Tibial artery (tissue), 4 donors: ENCODE measurements at regions of chr1 and their contacts with region 1.

Region 1: DNA sequence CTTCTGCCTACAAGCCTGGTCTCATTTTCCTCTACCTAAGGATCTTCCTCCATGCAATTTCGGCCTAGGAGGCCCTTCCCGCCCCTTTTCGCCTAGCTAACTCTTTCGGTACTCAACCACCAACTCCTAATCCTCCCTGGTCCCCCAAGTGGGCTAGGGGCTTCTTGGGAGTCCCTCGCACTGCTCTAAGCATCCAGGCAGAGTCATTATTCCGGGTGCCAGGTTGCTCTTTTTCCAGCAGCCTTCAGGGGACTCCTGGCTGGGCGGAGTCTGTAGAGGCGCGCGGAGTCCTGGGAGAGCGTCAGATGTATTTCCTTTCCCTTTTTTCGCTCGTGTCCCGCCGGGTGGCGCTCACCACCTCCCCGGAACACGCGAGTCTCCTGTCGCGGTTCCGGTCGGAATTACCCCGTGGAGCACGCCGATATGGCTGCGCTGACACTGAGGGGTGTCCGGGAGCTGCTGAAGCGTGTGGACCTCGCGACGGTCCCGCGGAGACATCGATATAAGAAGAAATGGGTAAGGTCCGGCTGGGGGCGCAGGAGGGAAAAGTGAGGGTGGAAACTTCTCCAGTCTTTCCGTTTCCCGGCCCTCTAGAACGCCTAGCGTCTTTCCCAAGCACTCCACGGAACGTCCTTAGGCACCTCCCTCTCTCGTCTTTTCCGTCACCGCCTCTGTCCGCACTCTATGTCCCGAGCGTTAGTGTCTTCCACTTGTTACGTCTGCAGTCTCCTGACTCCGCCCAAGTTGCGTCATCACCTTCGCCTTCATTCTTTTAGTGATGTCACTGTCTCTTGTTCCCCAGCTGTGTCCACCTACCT is at the start of gene NSUN4:
- DNase-seq: peak; percentile 95 to 97
- H3K4me3 ChIP-seq: peak within 1 kb of the TSS; percentile 59 to 82
- H3K27ac ChIP-seq: peak within 1 kb of the TSS; percentile 88 to 97
- H3K4me1 ChIP-seq: peaks cover 0 to 24% (median 20%) of the 10 kb centered on the region in 4 donors
- H3K27me3 ChIP-seq: no peaks in the 10 kb centered on the region
- CTCF ChIP-seq: peak; percentile 57 to 62

Region 2: GRCh38 chr1:46247436-46248121 is 93.0 kb before region 1 on chr1 and contains the start of gene RAD54L:
- intact Hi-C with region 1: loop called (anchors 10 kb)
- DNase-seq: peak; percentile 98
- H3K4me3 ChIP-seq: peak within 1 kb of the TSS; percentile 58 to 74
- H3K27ac ChIP-seq: peak within 1 kb of the TSS; percentile 45 to 61
- H3K4me1 ChIP-seq: peaks cover 0 to 15% (median 12%) of the 10 kb centered on the region in 4 donors
- H3K27me3 ChIP-seq: no peaks in the 10 kb centered on the region
- CTCF ChIP-seq: no peak

Region 3: GRCh38 chr1:46262508-46262907 is 78.1 kb before region 1 on chr1:
- intact Hi-C with region 1: no loop called
- DNase-seq: no peak
- H3K4me3 ChIP-seq: no peak overlapping the region
- H3K27ac ChIP-seq: no peak overlapping the region
- H3K4me1 ChIP-seq: no peaks in the 10 kb centered on the region
- H3K27me3 ChIP-seq: no peaks in the 10 kb centered on the region
- CTCF ChIP-seq: no peak